CD14-positive monocyte (primary cell): ENCODE measurements at regions of chr19 and their contacts with region 1.

Region 1: GRCh38 chr19:16572332-16573211 is at the start of gene SLC35E1:
- DNase-seq: peak; percentile 94 to 97 (median 95)
- H3K4me3 ChIP-seq: peak within 1 kb of the TSS; percentile 86 to 99 (median 90)
- H3K4me3 Mint-ChIP-seq: peak within 1 kb of the TSS; percentile 98 to 99
- H3K27ac ChIP-seq: peak within 1 kb of the TSS; percentile 68 to 98
- H3K27ac Mint-ChIP-seq: peak within 1 kb of the TSS; percentile 97 to 99 (median 98)
- H3K4me1 ChIP-seq: peaks cover 30 to 39% of the 10 kb centered on the region in 2 donors
- H3K4me1 Mint-ChIP-seq: peaks cover 32% of the 10 kb centered on the region
- H3K27me3 ChIP-seq: no peaks in the 10 kb centered on the region
- H3K27me3 Mint-ChIP-seq: no peaks in the 10 kb centered on the region
- CTCF ChIP-seq: no peak
- polyA plus RNA-seq, gene SLC35E1: 12.1 to 28.8 (median 13.5) TPM

Region 2: DNA sequence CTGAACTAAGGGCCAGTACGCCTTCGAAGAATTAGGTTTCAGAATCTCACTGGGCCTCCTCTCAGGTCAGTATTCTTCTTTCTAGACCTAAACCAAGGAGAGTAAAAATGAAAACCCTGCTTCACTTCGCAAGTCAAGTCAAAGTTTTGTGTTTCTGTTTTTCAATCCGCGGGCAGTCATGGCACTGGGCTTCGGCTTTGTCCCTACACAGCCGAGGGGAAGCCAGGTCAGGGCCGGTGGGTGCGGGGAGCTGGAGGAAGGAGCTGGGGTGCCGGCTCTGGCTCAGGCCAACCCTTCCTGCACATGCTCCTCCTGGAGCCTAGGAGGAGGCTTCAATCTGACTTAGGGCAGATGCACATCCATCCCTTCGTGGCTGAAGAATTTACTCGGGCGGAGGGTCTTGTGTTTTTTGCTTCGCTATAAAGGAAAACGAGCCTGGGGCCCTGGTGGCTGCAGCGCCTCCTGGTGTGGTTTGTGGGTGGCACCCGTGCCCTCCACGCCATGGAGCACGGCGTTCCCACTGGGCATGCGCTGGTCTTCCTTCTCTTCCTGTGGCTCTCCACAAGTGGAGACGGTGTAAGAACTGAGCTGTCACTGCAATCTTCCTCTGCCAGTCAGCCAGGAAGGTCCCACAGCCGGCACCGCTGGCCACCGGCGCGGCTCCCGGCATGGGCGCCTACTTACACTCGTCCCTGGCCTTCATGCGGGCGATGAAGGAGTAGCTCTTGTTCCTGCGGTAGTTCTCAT is 53.9 kb before region 1 on chr19:
- intact Hi-C with region 1: no loop called
- DNase-seq: no peak
- H3K4me3 ChIP-seq: no peak overlapping the region
- H3K4me3 Mint-ChIP-seq: no peak overlapping the region
- H3K27ac ChIP-seq: no peak overlapping the region
- H3K27ac Mint-ChIP-seq: peak overlapping the region in 4 of 7 donors; percentile 17 to 77 (median 48)
- H3K4me1 ChIP-seq: no peaks in the 10 kb centered on the region
- H3K4me1 Mint-ChIP-seq: no peaks in the 10 kb centered on the region
- H3K27me3 ChIP-seq: no peaks in the 10 kb centered on the region
- H3K27me3 Mint-ChIP-seq: no peaks in the 10 kb centered on the region
- CTCF ChIP-seq: no peak

Region 3: DNA sequence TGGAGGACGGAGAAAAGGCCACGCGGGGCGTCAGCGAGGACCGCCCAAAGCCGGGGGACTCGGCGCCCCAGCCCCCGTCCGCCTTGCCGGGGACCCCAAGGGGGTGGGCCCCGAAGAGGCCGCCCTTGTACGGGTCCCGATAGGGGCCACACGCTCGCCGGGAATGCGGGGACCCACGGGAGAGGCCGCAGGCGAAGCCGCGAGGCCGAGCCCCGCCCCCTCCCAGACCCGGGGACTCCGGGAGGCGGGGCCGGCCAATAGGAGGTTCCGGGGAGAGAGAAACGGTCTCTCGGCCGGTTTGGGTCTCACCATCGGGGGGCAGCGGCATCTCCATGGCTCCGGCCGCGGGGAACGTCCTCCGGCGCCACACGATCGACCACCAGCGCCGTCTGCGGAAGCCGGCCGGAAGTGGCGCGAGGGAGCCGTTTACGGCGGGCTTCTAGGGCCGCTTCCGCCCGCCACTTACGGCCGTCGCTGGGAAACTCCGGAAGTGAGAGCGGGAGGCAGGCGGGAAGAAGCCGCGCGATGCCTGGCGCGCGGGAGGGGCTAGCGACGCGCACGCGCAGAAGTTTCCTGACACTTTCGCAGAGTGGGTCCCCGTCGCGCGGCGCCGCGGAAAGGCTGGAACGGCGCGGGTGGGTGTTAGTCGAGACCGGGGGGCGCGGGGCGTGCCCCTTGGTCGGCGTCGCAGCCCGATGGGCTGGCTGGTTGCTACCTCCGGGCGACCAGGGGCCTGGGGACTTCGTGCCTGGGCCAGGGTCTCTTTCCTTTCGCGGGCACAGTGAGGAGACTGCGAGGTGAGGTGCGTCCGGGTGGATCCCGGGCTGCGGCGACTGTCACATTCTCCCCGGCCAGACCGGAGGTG is 30.3 kb before region 1 on chr19 and contains the start of gene CHERP:
- intact Hi-C with region 1: loop called in 1 of 2 experiments (anchors 2 kb)
- DNase-seq: peak; percentile 91 to 95 (median 93)
- H3K4me3 ChIP-seq: peak within 1 kb of the TSS; percentile 73 to 99 (median 86)
- H3K4me3 Mint-ChIP-seq: peak within 1 kb of the TSS; percentile 87 to 92
- H3K27ac ChIP-seq: peak within 1 kb of the TSS; percentile 63 to 90
- H3K27ac Mint-ChIP-seq: peak within 1 kb of the TSS; percentile 79 to 91 (median 88)
- H3K4me1 ChIP-seq: peaks cover 18 to 26% of the 10 kb centered on the region in 2 donors
- H3K4me1 Mint-ChIP-seq: peaks cover 36% of the 10 kb centered on the region
- H3K27me3 ChIP-seq: no peaks in the 10 kb centered on the region
- H3K27me3 Mint-ChIP-seq: no peaks in the 10 kb centered on the region
- CTCF ChIP-seq: no peak
- polyA plus RNA-seq, gene CHERP: 3.2 to 18.8 (median 5.3) TPM

Region 4: GRCh38 chr19:16561382-16561781 is 11.2 kb before region 1 on chr19:
- intact Hi-C with region 1: no loop called
- DNase-seq: no peak
- H3K4me3 ChIP-seq: no peak overlapping the region
- H3K4me3 Mint-ChIP-seq: no peak overlapping the region
- H3K27ac ChIP-seq: no peak overlapping the region
- H3K27ac Mint-ChIP-seq: peak overlapping the region in 2 of 7 donors; percentile 32 to 79
- H3K4me1 ChIP-seq: no peaks in the 10 kb centered on the region
- H3K4me1 Mint-ChIP-seq: peaks cover 2% of the 10 kb centered on the region
- H3K27me3 ChIP-seq: no peaks in the 10 kb centered on the region
- H3K27me3 Mint-ChIP-seq: peaks cover 0 to 1% (median 0%) of the 10 kb centered on the region in 3 donors
- CTCF ChIP-seq: no peak

Region 5: DNA sequence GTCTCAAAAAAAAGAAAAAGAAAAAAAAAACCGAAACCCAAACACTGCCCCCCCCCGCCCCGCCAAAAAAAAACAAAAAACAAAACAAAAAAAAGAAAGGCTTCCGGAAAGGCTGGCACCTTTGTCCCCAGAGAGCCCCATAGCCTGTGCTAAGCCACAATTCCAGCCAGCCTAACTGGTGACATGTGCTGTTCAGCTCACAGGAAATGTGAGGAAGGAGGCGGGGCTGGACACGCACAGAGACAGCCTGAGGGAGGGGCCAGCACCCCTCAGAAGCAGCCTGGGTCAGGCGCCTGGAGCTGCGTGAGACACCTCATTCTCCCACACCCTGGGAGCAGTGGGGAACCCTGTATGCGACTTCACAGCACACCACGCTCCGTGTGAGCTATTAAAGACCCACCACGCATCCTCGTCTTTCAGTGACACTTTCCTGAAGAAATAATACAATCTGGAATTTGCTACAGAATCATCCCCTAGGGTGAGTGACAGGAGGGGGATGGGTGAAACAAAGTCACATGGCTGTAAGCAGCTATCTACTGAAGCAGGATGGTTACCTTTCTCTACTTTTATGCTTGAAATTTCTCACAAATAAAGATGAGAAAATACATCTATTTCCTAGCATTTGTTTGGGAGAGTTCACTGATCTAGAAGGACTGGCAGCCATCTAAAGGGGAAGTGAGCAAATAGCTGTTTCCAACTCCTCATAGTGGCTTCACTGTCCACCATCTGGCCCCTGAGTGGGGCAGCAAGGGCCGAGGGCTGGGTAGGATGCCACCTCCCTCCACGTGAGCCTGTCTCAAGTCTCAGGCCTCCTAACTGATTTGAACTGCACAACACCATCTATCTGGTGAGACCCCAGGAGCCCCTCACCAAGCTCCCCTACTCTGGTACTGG is 11.9 kb after region 1 on chr19:
- intact Hi-C with region 1: loop called in 1 of 2 experiments (anchors 2 kb)
- DNase-seq: peak; percentile 93 to 98 (median 95)
- H3K4me3 ChIP-seq: peak overlapping the region; percentile 54 to 75 (median 55)
- H3K4me3 Mint-ChIP-seq: peak overlapping the region; percentile 83 to 93
- H3K27ac ChIP-seq: peak overlapping the region; percentile 99 to 100
- H3K27ac Mint-ChIP-seq: peak overlapping the region; percentile 96 to 98 (median 97)
- H3K4me1 ChIP-seq: peaks cover 62 to 71% of the 10 kb centered on the region in 2 donors
- H3K4me1 Mint-ChIP-seq: peaks cover 70% of the 10 kb centered on the region
- H3K27me3 ChIP-seq: no peaks in the 10 kb centered on the region
- H3K27me3 Mint-ChIP-seq: peaks cover 0 to 3% (median 2%) of the 10 kb centered on the region in 3 donors
- CTCF ChIP-seq: no peak

Region 6: GRCh38 chr19:16594681-16595091 is 22.1 kb after region 1 on chr19:
- intact Hi-C with region 1: no loop called
- DNase-seq: peak in 2 of 3 donors; percentile 14 to 36
- H3K4me3 ChIP-seq: peak overlapping the region in 1 of 3 experiments; percentile 36
- H3K4me3 Mint-ChIP-seq: peak overlapping the region in 1 of 2 donors; percentile 67
- H3K27ac ChIP-seq: peak overlapping the region; percentile 11 to 55
- H3K27ac Mint-ChIP-seq: peak overlapping the region; percentile 1 to 86 (median 70)
- H3K4me1 ChIP-seq: peaks cover 22 to 33% of the 10 kb centered on the region in 2 donors
- H3K4me1 Mint-ChIP-seq: peaks cover 43% of the 10 kb centered on the region
- H3K27me3 ChIP-seq: no peaks in the 10 kb centered on the region
- H3K27me3 Mint-ChIP-seq: peaks cover 0 to 2% (median 0%) of the 10 kb centered on the region in 3 donors
- CTCF ChIP-seq: no peak

Region 7: DNA sequence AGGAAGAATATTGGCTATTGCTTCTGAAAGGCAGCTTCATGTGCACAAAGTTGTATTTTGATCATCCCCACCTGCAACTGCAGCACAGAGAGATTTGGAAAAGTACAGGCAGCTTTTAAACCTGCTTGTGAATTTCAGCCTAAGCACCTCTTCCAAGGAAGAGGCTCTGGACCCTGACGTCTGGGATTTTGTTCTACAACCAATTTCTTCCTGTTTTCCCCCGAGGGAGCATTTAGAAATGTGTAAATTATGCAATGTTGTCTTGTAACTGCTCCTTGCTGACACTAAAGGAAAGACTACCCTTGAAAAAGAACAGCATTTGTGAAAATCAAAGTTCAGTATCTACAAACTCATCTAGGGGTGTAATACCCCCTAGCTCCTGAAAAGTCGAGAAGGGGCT is 40.0 kb after region 1 on chr19:
- intact Hi-C with region 1: loop called in 1 of 2 experiments (anchors 5 kb)
- DNase-seq: peak in 2 of 3 donors; percentile 37 to 46
- H3K4me3 ChIP-seq: no peak overlapping the region
- H3K4me3 Mint-ChIP-seq: no peak overlapping the region
- H3K27ac ChIP-seq: peak overlapping the region; percentile 35 to 67
- H3K27ac Mint-ChIP-seq: peak overlapping the region; percentile 26 to 80 (median 79)
- H3K4me1 ChIP-seq: peaks cover 52 to 64% of the 10 kb centered on the region in 2 donors
- H3K4me1 Mint-ChIP-seq: peaks cover 85% of the 10 kb centered on the region
- H3K27me3 ChIP-seq: no peaks in the 10 kb centered on the region
- H3K27me3 Mint-ChIP-seq: no peaks in the 10 kb centered on the region
- CTCF ChIP-seq: no peak

Region 8: DNA sequence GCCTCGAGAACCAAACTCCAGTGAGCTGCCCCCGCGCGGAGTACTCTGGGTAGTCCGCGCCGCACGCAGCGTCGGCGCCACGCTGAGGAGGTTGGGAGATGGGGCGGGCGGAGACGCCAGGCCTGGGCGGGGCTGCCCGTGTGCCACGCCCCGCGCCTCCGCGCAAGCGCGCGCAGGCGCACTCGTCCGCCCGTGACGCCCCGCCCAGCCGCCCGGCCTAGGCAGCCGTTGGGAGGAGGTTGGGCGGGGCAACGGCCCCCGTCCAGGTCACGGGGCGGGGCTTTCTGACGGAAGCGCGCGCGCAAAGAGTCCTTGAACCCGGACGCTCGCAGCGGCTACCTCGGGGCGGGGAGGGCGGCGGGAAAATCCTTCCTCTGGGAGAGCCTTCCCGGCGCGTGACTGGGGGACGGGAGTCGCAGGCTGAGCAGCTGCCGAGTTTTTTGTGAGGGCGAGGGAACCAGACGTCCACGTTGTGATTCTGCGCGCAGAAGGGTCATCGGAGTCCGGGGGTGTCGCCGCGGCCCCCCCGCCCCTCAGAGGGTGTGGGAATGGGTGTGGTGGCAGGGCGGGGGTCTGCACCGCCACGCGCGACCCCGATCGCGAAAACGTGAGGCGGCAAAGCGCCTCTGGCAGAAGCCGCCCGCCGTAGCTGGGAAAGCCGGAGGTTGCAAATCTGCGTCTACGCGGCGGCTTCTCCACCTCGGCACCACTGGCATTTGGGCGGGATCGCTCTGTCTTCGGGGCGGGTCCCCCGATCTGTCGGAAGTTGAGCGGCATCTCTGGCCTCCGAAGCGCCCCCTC is 55.8 kb after region 1 on chr19 and contains the start of gene MED26:
- intact Hi-C with region 1: loop called (anchors 2 to 5 kb)
- DNase-seq: peak; percentile 92 to 94 (median 93)
- H3K4me3 ChIP-seq: peak within 1 kb of the TSS; percentile 88 to 92 (median 89)
- H3K4me3 Mint-ChIP-seq: peak within 1 kb of the TSS; percentile 98
- H3K27ac ChIP-seq: peak within 1 kb of the TSS; percentile 67 to 90
- H3K27ac Mint-ChIP-seq: peak within 1 kb of the TSS; percentile 89 to 98 (median 95)
- H3K4me1 ChIP-seq: peaks cover 23 to 37% of the 10 kb centered on the region in 2 donors
- H3K4me1 Mint-ChIP-seq: peaks cover 32% of the 10 kb centered on the region
- H3K27me3 ChIP-seq: no peaks in the 10 kb centered on the region
- H3K27me3 Mint-ChIP-seq: peaks cover 0 to 1% (median 0%) of the 10 kb centered on the region in 3 donors
- CTCF ChIP-seq: no peak
- polyA plus RNA-seq, gene MED26: 1.1 to 7.1 (median 2.1) TPM

Region 9: GRCh38 chr19:17069218-17069617 is 496.6 kb after region 1 on chr19:
- intact Hi-C with region 1: no loop called
- DNase-seq: no peak
- H3K4me3 ChIP-seq: no peak overlapping the region
- H3K4me3 Mint-ChIP-seq: no peak overlapping the region
- H3K27ac ChIP-seq: peak overlapping the region in 1 of 2 donors; percentile 18
- H3K27ac Mint-ChIP-seq: peak overlapping the region in 3 of 7 donors; percentile 68 to 80 (median 79)
- H3K4me1 ChIP-seq: peaks cover 18% of the 10 kb centered on the region in 2 donors
- H3K4me1 Mint-ChIP-seq: peaks cover 45% of the 10 kb centered on the region
- H3K27me3 ChIP-seq: no peaks in the 10 kb centered on the region
- H3K27me3 Mint-ChIP-seq: peaks cover 0 to 5% (median 2%) of the 10 kb centered on the region in 3 donors
- CTCF ChIP-seq: no peak